ENCODE measurements at regions of chr14 and their contacts with region 1.

Region 1: GRCh38 chr14:67666750-67667449 is 7.5 kb downstream of the VTI1B start:
- DNase-seq: peak; percentile 46
- ATAC-seq: peak; percentile 80
- H3K4me3 Mint-ChIP-seq: no peak overlapping the region
- H3K27ac Mint-ChIP-seq: peak overlapping the region; percentile 68
- H3K4me1 Mint-ChIP-seq: peaks cover 46% of the 10 kb centered on the region
- H3K27me3 Mint-ChIP-seq: no peaks in the 10 kb centered on the region

Region 2: GRCh38 chr14:67127174-67127573 is 539.7 kb before region 1 on chr14:
- CTCF ChIA-PET with region 1: no interaction called
- POLR2A ChIA-PET with region 1: no interaction called
- intact Hi-C with region 1: no loop called
- DNase-seq: no peak
- ATAC-seq: no peak
- H3K4me3 Mint-ChIP-seq: no peak overlapping the region
- H3K27ac Mint-ChIP-seq: no peak overlapping the region
- H3K4me1 Mint-ChIP-seq: peaks cover 2% of the 10 kb centered on the region
- H3K27me3 Mint-ChIP-seq: no peaks in the 10 kb centered on the region

Region 3: DNA sequence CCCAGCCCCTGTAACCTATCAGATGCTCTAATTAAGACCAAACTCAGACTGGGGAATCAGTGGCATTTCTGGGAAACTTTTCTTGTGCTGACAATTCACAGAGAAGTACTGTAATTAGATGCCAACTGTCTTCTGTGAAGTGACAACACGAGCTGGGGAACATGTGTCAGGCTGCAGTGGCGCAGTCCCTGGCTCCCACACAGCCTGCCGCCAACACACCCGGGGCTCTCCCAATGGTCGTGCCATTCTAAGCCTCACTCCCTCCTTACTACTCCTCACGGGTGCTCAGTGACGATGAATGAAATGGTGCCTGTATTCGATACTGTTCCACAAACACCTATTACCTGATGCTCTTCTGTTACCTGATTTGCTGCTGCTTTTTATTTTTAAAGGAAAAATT is 459.1 kb before region 1 on chr14:
- CTCF ChIA-PET with region 1: no interaction called
- POLR2A ChIA-PET with region 1: no interaction called
- intact Hi-C with region 1: no loop called
- DNase-seq: no peak
- ATAC-seq: no peak
- H3K4me3 Mint-ChIP-seq: no peak overlapping the region
- H3K27ac Mint-ChIP-seq: no peak overlapping the region
- H3K4me1 Mint-ChIP-seq: no peaks in the 10 kb centered on the region
- H3K27me3 Mint-ChIP-seq: no peaks in the 10 kb centered on the region

Region 4: DNA sequence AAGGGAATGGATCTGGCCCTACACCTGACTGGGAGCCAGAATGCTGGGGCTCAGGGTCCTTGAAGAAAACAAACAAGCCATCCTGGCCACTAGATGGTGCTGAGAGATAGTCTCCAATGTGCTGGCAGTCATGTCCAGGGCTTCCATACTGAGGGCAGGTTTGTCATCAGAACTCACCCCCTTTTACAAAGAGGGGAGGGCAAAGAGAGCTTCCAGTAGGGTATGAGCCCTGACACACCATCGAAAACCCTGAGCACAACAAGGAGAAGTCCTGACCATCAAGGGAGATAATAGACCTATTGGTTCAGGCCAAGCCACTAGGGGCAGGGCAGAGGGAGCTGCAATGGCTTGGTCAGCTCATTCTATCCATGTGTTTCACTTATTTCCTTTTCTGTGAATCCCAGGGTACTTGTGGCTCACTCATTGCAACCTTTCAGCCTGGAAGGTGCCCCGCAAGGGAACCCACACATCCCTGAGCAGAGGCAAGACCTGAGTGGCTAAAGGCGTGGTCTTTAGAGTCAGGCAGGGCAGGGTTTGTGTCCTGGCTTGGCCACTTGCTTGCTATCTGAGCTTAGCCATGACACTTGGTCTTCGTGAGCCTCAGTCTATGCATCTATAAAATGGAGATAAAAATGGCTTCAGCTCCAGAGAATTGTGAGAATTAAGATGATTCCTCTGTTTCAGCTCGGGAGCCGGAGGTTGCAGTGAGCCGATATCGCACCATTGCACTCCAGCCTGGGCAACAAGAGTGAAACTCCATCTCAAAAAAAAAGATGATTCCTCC is 140.0 kb before region 1 on chr14:
- CTCF ChIA-PET with region 1: interaction called, 4 read pairs
- POLR2A ChIA-PET with region 1: no interaction called
- intact Hi-C with region 1: loop called (anchors 1 to 10 kb)
- DNase-seq: peak; percentile 60
- ATAC-seq: peak; percentile 91
- H3K4me3 Mint-ChIP-seq: no peak overlapping the region
- H3K27ac Mint-ChIP-seq: no peak overlapping the region
- H3K4me1 Mint-ChIP-seq: no peaks in the 10 kb centered on the region
- H3K27me3 Mint-ChIP-seq: peaks cover 12% of the 10 kb centered on the region

Region 5: DNA sequence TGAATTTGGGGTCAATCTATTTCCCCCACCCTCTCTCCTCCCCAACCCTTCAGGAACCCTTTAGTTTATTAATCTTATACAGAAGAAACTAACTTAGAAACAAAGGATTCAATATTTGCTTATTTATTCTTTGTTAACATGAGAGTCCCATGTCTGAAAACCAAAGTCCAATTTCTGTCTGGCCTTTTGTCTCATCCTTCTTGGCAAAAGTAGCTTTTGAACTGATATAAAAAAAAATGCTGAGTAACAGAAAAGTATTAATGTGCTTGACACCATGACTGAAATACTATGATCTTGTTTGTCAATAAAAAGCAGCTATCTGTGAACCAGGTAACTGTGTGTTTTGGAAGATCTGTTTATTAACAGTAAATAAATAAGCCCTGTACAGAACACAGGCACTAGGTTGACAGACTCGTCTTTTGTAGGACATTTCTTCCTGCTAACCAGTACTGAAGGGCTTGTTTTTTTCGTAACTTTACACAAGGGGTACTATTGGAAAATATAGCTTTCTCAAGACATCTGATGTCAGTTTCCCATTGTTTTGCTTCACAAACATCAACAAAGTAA is 77.6 kb before region 1 on chr14:
- CTCF ChIA-PET with region 1: interaction called, 53 read pairs
- POLR2A ChIA-PET with region 1: interaction called, 13 read pairs
- intact Hi-C with region 1: loop called (anchors 1 to 2 kb)
- DNase-seq: no peak
- ATAC-seq: no peak
- H3K4me3 Mint-ChIP-seq: no peak overlapping the region
- H3K27ac Mint-ChIP-seq: no peak overlapping the region
- H3K4me1 Mint-ChIP-seq: no peaks in the 10 kb centered on the region
- H3K27me3 Mint-ChIP-seq: no peaks in the 10 kb centered on the region

Region 6: DNA sequence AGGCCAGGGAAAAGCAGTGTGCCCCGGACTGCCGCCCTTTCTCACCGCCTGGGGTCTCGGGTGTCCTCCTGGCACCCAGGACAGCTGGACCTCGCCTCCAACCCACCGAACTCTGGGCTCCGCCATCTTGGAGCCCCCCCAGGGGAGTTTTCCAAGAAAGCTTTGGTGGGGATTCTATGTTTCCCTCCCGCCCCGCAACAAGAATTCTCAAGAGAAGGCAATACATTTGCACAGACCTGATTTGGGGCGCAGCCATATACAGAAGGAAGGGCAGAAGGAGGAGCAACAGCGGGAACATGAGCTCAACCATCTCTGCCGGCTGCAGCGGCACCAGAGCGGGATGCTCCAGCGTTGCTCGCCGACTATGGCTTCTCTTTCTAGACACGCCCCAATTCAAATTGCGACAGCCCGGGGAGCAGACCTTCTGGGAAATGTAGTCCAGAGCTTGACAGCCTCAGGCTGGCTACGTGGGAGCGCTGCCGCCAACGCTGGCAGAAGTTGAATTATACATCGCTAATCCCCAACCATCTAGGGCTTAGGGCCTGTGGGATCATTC is 28.6 kb after region 1 on chr14 and contains the start of gene RDH11:
- CTCF ChIA-PET with region 1: interaction called, 12 read pairs
- POLR2A ChIA-PET with region 1: interaction called, 3 read pairs
- intact Hi-C with region 1: loop called in 1 of 2 experiments (anchors 5 kb)
- DNase-seq: peak; percentile 92
- ATAC-seq: peak; percentile 88
- H3K4me3 Mint-ChIP-seq: peak within 1 kb of the TSS; percentile 91
- H3K27ac Mint-ChIP-seq: peak within 1 kb of the TSS; percentile 98
- H3K4me1 Mint-ChIP-seq: peaks cover 21% of the 10 kb centered on the region
- H3K27me3 Mint-ChIP-seq: no peaks in the 10 kb centered on the region
- total RNA-seq, gene RDH11: 72.0 to 75.6 TPM

Measured in activated CD4-positive, alpha-beta T cell treated with anti-CD3 and anti-CD28 coated beads for 36 hours (primary cell).